H1 (cell line): ENCODE measurements at regions of chr1 and their contacts with region 1.

Region 1: GRCh38 chr1:221203224-221204054 is 324.2 kb downstream of the HLX start:
- DNase-seq: peak; percentile 54 to 92
- H3K4me3 ChIP-seq: no peak overlapping the region
- H3K27ac ChIP-seq: no peak overlapping the region
- H3K4me1 ChIP-seq: no peaks in the 10 kb centered on the region
- H3K27me3 ChIP-seq: no peaks in the 10 kb centered on the region
- CTCF ChIP-seq: peak; percentile 73 to 89 (median 77)
- EP300 ChIP-seq: no peak
- POLR2A ChIP-seq: no peak
- RAD21 ChIP-seq: peak; percentile 84 to 89

Region 2: DNA sequence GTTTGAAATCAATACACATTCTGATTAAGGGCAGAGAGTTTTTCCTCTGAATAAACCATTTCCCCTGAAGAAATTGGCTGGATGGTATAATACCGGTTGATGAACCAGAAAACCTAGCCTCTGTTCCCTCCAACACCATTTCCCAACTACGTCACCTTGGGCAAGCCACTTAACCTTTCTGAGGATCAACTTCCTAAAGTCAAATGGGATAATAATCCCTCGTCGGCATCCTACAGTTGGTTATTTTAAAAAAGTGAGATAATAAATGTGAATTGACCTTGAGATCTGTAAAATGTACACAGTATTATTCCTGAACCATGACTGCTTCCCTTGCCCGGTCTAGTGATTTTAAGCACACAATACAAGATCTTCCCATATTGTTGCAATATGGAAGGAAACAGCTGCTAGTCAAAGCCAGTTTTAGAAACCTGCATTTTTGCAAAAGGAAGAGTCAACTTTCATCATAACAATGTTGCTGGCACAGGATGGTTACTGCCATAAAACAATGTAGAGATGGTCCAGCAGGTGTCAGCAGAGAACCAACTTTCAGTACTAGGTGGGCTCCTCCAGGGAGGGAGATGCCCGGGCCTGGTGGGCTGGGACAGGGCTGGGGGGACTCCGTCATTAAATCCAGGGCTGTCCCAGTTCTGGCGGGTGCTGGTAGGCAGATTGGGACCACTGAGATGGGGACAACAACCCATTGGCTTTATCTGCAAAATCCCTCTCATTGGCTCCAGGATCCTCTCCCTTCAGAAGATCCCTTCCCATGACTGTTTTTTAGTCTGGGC is 329.4 kb before region 1 on chr1:
- CTCF ChIA-PET with region 1: interaction called, 13 read pairs
- POLR2A ChIA-PET with region 1: no interaction called
- DNase-seq: peak in 1 of 2 experiments; percentile 74
- H3K4me3 ChIP-seq: no peak overlapping the region
- H3K27ac ChIP-seq: no peak overlapping the region
- H3K4me1 ChIP-seq: peaks cover 3 to 11% (median 7%) of the 10 kb centered on the region in 4 experiments
- H3K27me3 ChIP-seq: peaks cover 37 to 49% (median 45%) of the 10 kb centered on the region in 4 experiments
- CTCF ChIP-seq: peak; percentile 41 to 75 (median 73)
- EP300 ChIP-seq: no peak
- POLR2A ChIP-seq: no peak
- RAD21 ChIP-seq: peak; percentile 86 to 91

Region 3: GRCh38 chr1:220908757-220909156 is 294.7 kb before region 1 on chr1:
- CTCF ChIA-PET with region 1: interaction called, 23 read pairs
- POLR2A ChIA-PET with region 1: no interaction called
- DNase-seq: no peak
- H3K4me3 ChIP-seq: no peak overlapping the region
- H3K27ac ChIP-seq: no peak overlapping the region
- H3K4me1 ChIP-seq: no peaks in the 10 kb centered on the region
- H3K27me3 ChIP-seq: no peaks in the 10 kb centered on the region
- CTCF ChIP-seq: peak in 2 of 3 experiments; percentile 12 to 20; a peak in 2 of 4 replicates
- EP300 ChIP-seq: no peak
- POLR2A ChIP-seq: no peak
- RAD21 ChIP-seq: peak; percentile 47 to 51

Region 4: GRCh38 chr1:221069178-221069903 is 134.1 kb before region 1 on chr1:
- CTCF ChIA-PET with region 1: no interaction called
- POLR2A ChIA-PET with region 1: no interaction called
- DNase-seq: no peak
- H3K4me3 ChIP-seq: no peak overlapping the region
- H3K27ac ChIP-seq: no peak overlapping the region
- H3K4me1 ChIP-seq: no peaks in the 10 kb centered on the region
- H3K27me3 ChIP-seq: no peaks in the 10 kb centered on the region; a peak in 1 of 7 replicates
- CTCF ChIP-seq: no peak
- EP300 ChIP-seq: no peak
- POLR2A ChIP-seq: no peak
- RAD21 ChIP-seq: no peak

Region 5: DNA sequence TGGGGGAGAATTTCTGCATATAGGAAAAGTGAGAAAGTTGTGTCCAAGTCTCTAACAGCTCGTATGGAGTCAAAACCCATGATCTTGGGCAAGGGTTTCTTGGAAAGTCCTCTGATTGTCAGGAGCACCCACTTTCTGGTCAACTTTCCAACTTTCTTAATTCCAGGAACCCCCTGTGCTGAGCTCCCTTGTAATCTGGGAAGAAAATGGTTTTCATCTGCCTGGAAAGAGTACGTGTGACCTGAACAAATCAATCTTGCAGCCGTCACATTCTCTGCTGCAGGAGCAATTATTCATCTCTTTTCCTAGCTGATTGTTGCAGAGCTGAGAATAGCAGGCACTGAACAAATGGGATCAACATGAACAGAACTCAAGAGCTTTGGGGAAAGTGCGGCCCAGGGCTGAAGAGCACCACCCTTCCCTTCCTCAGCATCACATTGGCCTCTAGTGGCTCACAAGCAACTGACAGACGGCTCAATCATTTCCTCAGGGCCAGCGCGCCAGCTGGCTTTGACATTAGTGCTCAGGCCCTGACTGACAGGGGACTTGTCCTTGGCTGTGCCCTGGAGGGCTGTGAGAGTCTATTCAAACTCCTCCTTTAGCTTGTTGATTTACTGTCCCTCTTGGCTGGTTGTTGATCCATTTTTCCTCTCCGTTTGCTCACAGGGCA is 29.0 kb before region 1 on chr1:
- CTCF ChIA-PET with region 1: interaction called, 19 read pairs
- POLR2A ChIA-PET with region 1: no interaction called
- DNase-seq: peak in 1 of 2 experiments; percentile 17
- H3K4me3 ChIP-seq: no peak overlapping the region
- H3K27ac ChIP-seq: no peak overlapping the region
- H3K4me1 ChIP-seq: peaks cover 0 to 7% (median 1%) of the 10 kb centered on the region in 4 experiments; a peak in 2 of 7 replicates
- H3K27me3 ChIP-seq: no peaks in the 10 kb centered on the region
- CTCF ChIP-seq: peak; percentile 48 to 63 (median 57)
- EP300 ChIP-seq: no peak
- POLR2A ChIP-seq: no peak
- RAD21 ChIP-seq: peak; percentile 80 to 83

Region 6: DNA sequence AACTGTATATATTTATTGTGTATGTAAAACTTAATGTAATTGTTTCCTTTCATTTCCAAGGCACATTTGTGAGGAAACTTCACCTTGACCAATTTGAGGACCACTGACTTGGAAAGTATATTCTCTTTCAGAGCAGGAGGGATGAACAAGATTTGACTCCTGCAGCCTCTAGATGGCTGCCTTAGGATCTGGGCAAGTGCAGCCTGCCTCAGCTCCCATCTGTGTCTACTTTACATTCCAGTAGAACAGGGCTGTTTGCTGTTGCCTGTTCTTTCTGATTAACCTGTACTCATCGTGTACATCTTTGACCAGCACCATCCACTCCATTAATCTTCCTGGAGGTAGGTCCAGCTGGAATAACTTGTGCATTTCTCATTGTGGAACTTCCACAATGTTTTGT is 11.4 kb before region 1 on chr1:
- CTCF ChIA-PET with region 1: interaction called, 12 read pairs
- POLR2A ChIA-PET with region 1: no interaction called
- DNase-seq: no peak
- H3K4me3 ChIP-seq: no peak overlapping the region
- H3K27ac ChIP-seq: no peak overlapping the region
- H3K4me1 ChIP-seq: no peaks in the 10 kb centered on the region
- H3K27me3 ChIP-seq: no peaks in the 10 kb centered on the region
- CTCF ChIP-seq: no peak
- EP300 ChIP-seq: no peak
- POLR2A ChIP-seq: no peak
- RAD21 ChIP-seq: 0 out of 4 replicates have a peak, but pooled peaks of 1 of the 2 experiments have one; percentile 2

Region 7: GRCh38 chr1:221230605-221231004 is 27.2 kb after region 1 on chr1:
- CTCF ChIA-PET with region 1: interaction called, 11 read pairs
- POLR2A ChIA-PET with region 1: no interaction called
- DNase-seq: no peak
- H3K4me3 ChIP-seq: no peak overlapping the region
- H3K27ac ChIP-seq: no peak overlapping the region
- H3K4me1 ChIP-seq: peaks cover 6 to 13% (median 11%) of the 10 kb centered on the region in 4 experiments; a peak in 5 of 7 replicates
- H3K27me3 ChIP-seq: peaks cover 0 to 8% (median 3%) of the 10 kb centered on the region in 4 experiments; a peak in 2 of 7 replicates
- CTCF ChIP-seq: no peak
- EP300 ChIP-seq: no peak
- POLR2A ChIP-seq: no peak
- RAD21 ChIP-seq: no peak

Region 8: DNA sequence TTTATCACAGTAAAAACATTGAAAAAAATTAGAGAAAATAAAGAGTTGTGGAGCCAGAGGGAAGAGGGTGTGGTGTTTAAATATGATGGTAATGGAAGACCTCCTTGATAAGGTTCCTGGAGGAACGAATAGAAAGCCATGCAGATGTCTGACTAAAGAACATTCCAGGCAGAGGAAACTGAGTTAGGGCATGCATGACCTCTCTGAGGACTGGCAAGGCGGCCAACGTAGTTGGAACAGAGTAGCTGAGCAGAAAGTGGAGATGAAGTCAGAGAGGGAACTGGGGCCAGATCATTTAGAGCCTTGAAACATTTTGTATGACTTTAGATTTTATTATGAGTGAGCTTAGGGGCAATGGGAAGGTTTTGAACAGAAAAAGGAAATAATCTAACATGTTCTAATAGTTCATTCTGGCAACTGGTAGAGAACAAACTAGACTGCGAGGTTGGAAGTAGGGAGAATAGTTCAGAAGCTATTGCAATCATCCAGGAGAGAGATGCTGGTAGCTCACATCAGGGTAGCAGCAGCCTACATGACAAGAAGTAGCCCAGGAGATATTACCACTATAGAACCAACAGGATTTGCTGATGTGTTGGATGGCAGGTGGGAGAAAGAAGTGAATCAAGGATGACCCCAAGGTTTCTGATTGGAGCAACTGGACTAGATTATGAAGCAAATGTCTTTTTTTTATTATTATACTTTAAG is 53.5 kb after region 1 on chr1:
- CTCF ChIA-PET with region 1: no interaction called
- POLR2A ChIA-PET with region 1: no interaction called
- DNase-seq: no peak
- H3K4me3 ChIP-seq: no peak overlapping the region
- H3K27ac ChIP-seq: no peak overlapping the region
- H3K4me1 ChIP-seq: no peaks in the 10 kb centered on the region
- H3K27me3 ChIP-seq: no peaks in the 10 kb centered on the region
- CTCF ChIP-seq: no peak
- EP300 ChIP-seq: no peak
- POLR2A ChIP-seq: no peak
- RAD21 ChIP-seq: no peak

Region 9: DNA sequence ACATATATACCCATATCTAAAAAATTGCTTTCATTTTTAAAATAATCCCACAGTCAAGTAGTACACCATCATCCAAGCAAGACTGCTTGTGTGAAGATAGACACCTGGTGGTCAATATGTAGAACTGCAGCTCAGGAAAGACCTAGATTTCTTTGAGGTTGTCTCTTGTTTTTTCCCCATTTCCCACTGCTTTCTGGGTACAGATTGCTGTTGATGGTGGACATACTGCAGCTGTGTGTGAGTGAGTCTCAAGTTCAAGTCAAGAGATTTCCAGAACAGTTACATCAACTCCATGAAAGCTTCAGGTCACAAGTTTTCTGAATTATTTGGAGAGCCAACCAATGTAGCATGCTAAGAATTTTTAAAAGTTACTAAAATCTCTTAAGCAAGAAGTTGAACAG is 232.1 kb after region 1 on chr1:
- CTCF ChIA-PET with region 1: interaction called, 10 read pairs
- POLR2A ChIA-PET with region 1: no interaction called
- DNase-seq: no peak
- H3K4me3 ChIP-seq: no peak overlapping the region
- H3K27ac ChIP-seq: no peak overlapping the region
- H3K4me1 ChIP-seq: peaks cover 0 to 4% (median 0%) of the 10 kb centered on the region in 4 experiments; a peak in 1 of 7 replicates
- H3K27me3 ChIP-seq: no peaks in the 10 kb centered on the region
- CTCF ChIP-seq: peak in 2 of 3 experiments; percentile 62 to 85; a peak in 2 of 4 replicates
- EP300 ChIP-seq: no peak
- POLR2A ChIP-seq: no peak
- RAD21 ChIP-seq: peak; percentile 82 to 86